ENCODE measurements at regions of chr9 and their contacts with region 1.

Region 1: GRCh38 chr9:15552636-15553527 is at the start of gene CCDC171:
- DNase-seq: peak; percentile 99 to 100 (median 99)
- H3K4me3 ChIP-seq: peak within 1 kb of the TSS; percentile 87 to 99 (median 98)
- H3K27ac ChIP-seq: peak within 1 kb of the TSS; percentile 80 to 91
- H3K4me1 ChIP-seq: peaks cover 2 to 28% (median 15%) of the 10 kb centered on the region in 4 experiments
- H3K27me3 ChIP-seq: no peaks in the 10 kb centered on the region

Region 2: GRCh38 chr9:15505921-15506320 is 47.0 kb before region 1 on chr9:
- CTCF ChIA-PET with region 1: interaction called, 34 read pairs
- POLR2A ChIA-PET with region 1: interaction called, 28 read pairs
- DNase-seq: peak; percentile 60 to 79 (median 77)
- H3K4me3 ChIP-seq: no peak overlapping the region
- H3K27ac ChIP-seq: no peak overlapping the region
- H3K4me1 ChIP-seq: peaks cover 9 to 37% (median 16%) of the 10 kb centered on the region in 4 experiments
- H3K27me3 ChIP-seq: no peaks in the 10 kb centered on the region

Region 3: DNA sequence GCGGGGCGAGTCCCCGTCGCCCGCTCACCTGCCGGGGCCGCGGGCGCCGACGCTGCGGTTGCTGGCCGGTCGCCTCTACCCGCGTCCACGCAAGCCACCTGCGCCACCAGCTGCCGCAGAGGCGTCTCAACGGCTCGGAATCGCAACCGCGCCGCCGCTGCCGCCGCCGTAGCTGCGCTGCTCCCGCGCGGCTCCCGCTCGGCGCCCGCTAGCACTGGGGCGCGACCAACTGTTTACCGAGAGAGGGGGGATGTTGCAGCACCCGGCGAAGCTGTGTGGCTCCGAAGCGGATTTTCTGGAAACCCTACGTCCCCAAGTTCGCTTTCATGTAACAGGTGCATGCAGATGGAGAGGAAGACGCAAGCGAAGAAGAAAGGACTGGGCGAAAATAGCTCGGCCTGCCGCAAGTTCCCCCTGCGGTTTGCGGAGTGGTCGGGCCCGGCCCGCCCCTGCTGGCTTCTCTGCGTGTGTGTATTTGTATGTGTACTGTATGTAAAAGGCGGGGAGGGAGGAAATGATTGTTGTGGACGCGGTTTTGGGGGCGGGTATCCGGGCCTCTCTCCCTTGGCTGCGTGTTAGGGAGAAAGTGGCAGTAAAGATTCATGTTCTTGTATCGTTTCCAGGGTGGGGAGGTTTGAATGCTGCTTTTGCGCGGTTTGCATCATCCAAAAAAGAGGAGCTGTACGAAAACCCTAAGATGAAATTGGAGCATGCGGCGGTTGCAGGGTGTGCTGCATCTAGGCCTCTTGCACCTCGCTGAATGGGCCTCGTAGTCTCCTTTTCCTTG is 41.9 kb before region 1 on chr9 and contains the start of gene PSIP1:
- CTCF ChIA-PET with region 1: interaction called, 34 read pairs
- POLR2A ChIA-PET with region 1: interaction called, 28 read pairs
- DNase-seq: peak; percentile 94 to 97 (median 97)
- H3K4me3 ChIP-seq: peak within 1 kb of the TSS; percentile 90 to 99 (median 92)
- H3K27ac ChIP-seq: peak within 1 kb of the TSS; percentile 99 to 100
- H3K4me1 ChIP-seq: peaks cover 19 to 47% (median 35%) of the 10 kb centered on the region in 4 experiments
- H3K27me3 ChIP-seq: no peaks in the 10 kb centered on the region

Region 4: GRCh38 chr9:15977438-15977837 is 424.6 kb after region 1 on chr9:
- CTCF ChIA-PET with region 1: no interaction called
- POLR2A ChIA-PET with region 1: no interaction called
- DNase-seq: no peak
- H3K4me3 ChIP-seq: no peak overlapping the region
- H3K27ac ChIP-seq: no peak overlapping the region
- H3K4me1 ChIP-seq: no peaks in the 10 kb centered on the region
- H3K27me3 ChIP-seq: no peaks in the 10 kb centered on the region

Measured in common myeloid progenitor, CD34-positive (primary cell).